ENCODE measurements at regions of chr16 and their contacts with region 1.

Region 1: DNA sequence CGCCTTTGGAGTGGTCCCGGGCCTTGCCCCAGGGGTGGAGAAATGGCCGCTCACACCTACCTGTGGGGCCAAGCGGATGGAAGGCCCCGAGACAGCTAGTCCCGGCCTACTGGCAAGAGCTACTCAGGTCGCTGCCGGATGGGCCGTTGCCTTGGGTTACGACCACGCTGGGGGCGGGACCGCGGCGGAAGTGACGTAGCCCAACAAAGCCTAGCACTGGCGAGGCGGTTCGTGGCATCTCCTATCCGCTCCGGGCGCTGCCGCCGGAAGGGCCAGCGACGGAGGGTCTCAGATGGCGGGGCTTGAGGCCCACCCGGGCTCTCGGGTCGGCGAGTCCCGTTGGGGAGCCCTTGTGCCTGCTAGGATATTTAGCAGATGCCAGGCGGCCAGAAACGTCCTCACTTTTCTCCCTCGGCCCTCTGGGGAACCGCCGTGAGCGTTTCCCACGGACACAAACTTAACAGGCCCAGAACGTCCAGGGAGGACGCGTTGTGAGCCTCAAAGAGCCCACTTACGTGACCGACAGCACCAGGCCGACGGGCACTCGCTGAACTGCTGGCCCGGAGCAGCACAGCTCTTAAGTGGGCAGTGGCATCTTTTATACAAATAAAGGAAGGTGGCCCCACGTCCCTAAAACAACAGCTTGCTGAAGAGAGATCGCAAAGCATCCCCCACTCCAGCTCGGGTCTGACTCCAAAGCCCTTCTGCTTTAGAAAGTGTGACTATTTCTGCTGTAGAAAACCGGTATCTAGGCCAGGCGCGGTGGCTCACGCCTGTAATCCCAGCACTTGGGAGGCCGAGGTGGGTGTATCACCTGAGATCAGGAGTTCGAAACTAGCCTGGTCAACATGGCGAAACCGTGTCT is at the start of gene C16orf46:
- DNase-seq: peak; percentile 93 to 99
- H3K4me3 ChIP-seq: peak within 1 kb of the TSS; percentile 72 to 91
- H3K27ac ChIP-seq: peak within 1 kb of the TSS; percentile 96 to 99
- H3K4me1 ChIP-seq: peaks cover 0 to 4% of the 10 kb centered on the region in 2 donors
- H3K27me3 ChIP-seq: no peaks in the 10 kb centered on the region
- CTCF ChIP-seq: no peak
- total RNA-seq, gene C16orf46: not detected

Region 2: DNA sequence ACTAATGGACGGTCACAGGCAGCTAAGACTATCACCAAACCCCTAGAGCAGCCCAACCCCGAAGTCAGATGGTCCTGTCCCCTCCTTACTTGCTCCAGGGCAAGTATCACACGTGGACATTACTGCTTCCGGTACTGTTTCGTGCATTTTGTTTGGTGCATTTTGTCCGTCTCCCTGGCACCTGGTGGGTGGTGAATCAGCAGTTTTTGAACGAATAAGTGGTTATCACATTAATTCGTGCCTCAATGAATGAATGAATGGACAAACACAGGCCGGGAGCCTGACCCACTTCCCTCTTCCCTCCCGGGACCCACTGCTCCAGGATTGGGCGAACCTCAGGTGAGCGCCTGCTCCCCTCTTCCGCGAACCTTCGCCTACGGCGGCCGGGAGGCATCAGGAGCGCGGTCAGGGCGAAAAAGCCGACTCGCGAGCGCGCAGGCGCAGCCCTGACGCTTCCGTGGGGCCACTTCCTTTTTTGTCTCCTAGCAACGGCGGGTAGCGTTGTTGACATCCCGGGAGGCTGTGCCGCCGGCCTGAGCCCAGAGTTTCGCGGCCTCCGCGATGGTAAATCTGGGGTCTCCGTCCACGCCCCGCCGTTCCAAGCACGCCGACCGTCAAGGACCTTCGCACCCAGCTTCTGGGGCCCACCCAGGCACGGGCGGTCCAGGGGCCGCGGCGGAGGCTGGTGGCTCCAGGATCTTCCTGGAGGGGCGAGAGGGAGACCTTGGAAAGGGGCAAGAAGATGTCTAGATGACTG is 536.6 kb before region 1 on chr16 and contains the start of gene DYNLRB2:
- intact Hi-C with region 1: loop called (anchors 2 kb)
- DNase-seq: peak; percentile 56 to 94
- H3K4me3 ChIP-seq: peak within 1 kb of the TSS; percentile 81
- H3K27ac ChIP-seq: peak within 1 kb of the TSS; percentile 51 to 60
- H3K4me1 ChIP-seq: no peaks in the 10 kb centered on the region
- H3K27me3 ChIP-seq: no peaks in the 10 kb centered on the region
- CTCF ChIP-seq: no peak
- total RNA-seq, gene DYNLRB2: not detected

Region 3: DNA sequence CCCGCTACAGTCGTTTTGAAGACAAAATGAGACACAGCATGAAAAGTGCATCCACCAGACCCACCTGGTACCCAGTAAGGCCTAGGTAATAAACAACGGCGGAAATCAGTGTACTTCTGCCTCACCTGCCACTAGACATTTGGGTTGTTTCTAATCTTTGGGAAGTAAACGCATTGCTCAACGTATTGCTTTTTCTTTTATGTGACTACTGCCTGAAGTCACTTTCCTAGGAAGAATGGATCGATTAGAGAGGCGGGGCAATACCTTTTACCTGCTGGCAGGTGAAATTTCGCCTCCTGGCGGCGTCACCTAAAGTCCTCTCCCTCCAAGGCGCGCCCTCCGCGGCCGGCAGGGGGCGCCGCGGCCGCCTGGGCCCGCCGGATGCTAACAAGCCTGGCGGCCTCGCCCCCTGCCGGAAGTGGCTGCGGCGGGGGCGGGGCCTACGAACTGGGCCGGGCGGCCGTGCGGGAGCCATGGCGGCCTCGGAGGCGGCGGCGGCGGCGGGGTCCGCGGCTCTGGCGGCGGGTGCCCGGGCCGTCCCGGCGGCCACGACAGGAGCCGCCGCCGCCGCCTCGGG is 41.8 kb before region 1 on chr16 and contains the start of gene ATMIN:
- intact Hi-C with region 1: loop called (anchors 1 kb)
- DNase-seq: peak; percentile 25 to 90
- H3K4me3 ChIP-seq: peak within 1 kb of the TSS; percentile 90 to 93
- H3K27ac ChIP-seq: peak within 1 kb of the TSS in 1 of 2 donors; percentile 52
- H3K4me1 ChIP-seq: peaks cover 0 to 9% of the 10 kb centered on the region in 2 donors
- H3K27me3 ChIP-seq: no peaks in the 10 kb centered on the region
- CTCF ChIP-seq: peak; percentile 90 to 97 (median 90)
- total RNA-seq, gene ATMIN: 11.9 TPM

Region 4: GRCh38 chr16:81181013-81181720 is 103.9 kb after region 1 on chr16:
- intact Hi-C with region 1: loop called (anchors 1 kb)
- DNase-seq: peak; percentile 48 to 92
- H3K4me3 ChIP-seq: no peak overlapping the region
- H3K27ac ChIP-seq: peak overlapping the region; percentile 69 to 79
- H3K4me1 ChIP-seq: peaks cover 0 to 10% of the 10 kb centered on the region in 2 donors
- H3K27me3 ChIP-seq: no peaks in the 10 kb centered on the region
- CTCF ChIP-seq: no peak

Region 5: DNA sequence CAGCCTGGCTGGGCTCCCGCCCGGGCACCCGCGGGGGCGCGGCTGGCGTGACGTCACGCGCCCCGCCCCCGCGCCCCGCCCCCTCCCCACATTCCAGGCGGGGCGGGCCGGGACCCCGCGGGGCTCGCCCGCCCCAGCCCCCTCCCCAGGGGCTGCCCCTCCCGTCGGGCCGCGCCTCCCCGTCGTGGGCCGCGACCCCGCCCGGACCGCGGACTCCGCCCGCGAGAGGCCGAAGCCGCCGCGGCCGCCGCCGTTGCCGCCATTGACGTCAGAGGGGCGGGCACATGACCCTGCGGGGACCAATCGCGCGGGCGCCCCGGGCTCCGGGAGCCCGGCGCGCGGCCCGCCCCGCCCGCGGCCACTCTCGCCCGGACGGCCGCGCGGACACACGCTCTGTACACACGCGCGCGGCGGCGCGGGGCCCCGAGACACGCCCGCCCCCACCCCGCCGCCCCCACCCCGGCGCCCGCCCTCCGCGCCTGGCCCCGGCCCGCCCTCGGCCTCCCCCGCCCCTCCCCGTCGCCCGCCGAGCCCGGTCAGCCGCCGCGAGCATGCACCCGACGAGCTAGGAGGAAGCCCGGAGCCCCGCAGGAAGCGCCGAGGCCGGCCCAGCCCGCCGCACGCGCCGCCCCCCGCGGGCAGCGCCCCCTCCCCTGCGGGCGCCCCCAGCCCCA is 367.3 kb after region 1 on chr16 and contains the start of gene CMIP:
- intact Hi-C with region 1: loop called (anchors 5 kb)
- DNase-seq: peak in 1 of 2 donors; percentile 89
- H3K4me3 ChIP-seq: peak within 1 kb of the TSS; percentile 58 to 75
- H3K27ac ChIP-seq: peak within 1 kb of the TSS; percentile 69 to 70
- H3K4me1 ChIP-seq: peaks cover 0 to 4% of the 10 kb centered on the region in 2 donors
- H3K27me3 ChIP-seq: no peaks in the 10 kb centered on the region
- CTCF ChIP-seq: no peak
- total RNA-seq, gene CMIP: 110 TPM